ENCODE measurements at regions of chr2 and their contacts with region 1.

Region 1: DNA sequence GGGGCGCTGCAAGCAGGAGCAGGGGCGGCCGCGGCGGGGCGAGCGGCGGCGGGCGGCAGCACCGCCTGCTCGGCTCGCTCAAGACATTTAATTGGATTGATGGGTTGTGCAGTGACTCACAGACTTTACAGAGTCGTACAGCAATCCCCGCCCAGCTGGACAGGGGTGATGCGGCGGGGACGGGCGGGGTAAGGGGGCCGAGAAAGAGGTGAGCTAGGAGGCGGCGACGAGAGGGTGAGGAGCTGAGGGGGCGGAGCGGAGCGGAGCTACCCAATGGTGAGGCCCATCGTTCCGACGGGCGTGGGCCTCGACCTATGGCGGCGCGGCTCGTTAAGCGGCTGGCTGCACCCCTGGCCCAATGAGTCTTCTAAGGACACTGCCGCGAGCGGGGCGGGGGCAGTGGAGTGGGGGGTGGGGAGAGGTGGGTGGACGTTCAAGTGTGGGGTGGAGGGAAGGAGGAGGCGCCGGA is 97.1 kb upstream of the SERTAD2 start:
- DNase-seq: peak; percentile 99
- ATAC-seq: peak; percentile 93
- H3K4me3 ChIP-seq: peak overlapping the region; percentile 94 to 98
- H3K27ac ChIP-seq: peak overlapping the region; percentile 97
- H3K4me1 ChIP-seq: peaks cover 31% of the 10 kb centered on the region
- H3K27me3 ChIP-seq: no peaks in the 10 kb centered on the region
- CTCF ChIP-seq: no peak

Region 2: GRCh38 chr2:64362562-64363026 is 388.3 kb before region 1 on chr2:
- CTCF ChIA-PET with region 1: no interaction called
- POLR2A ChIA-PET with region 1: no interaction called
- in situ Hi-C with region 1: no loop called
- intact Hi-C with region 1: no loop called
- DNase-seq: no peak
- ATAC-seq: no peak
- H3K4me3 ChIP-seq: no peak overlapping the region
- H3K27ac ChIP-seq: no peak overlapping the region
- H3K4me1 ChIP-seq: no peaks in the 10 kb centered on the region
- H3K27me3 ChIP-seq: peaks cover 9% of the 10 kb centered on the region
- CTCF ChIP-seq: no peak

Region 3: GRCh38 chr2:64644177-64645004 is 106.5 kb before region 1 on chr2:
- CTCF ChIA-PET with region 1: interaction called, 4 read pairs
- POLR2A ChIA-PET with region 1: no interaction called
- in situ Hi-C with region 1: no loop called
- intact Hi-C with region 1: loop called (anchors 5 kb)
- DNase-seq: peak; percentile 53
- ATAC-seq: peak; percentile 90
- H3K4me3 ChIP-seq: peak overlapping the region; percentile 44 to 72
- H3K27ac ChIP-seq: peak overlapping the region; percentile 98
- H3K4me1 ChIP-seq: peaks cover 78% of the 10 kb centered on the region
- H3K27me3 ChIP-seq: no peaks in the 10 kb centered on the region
- CTCF ChIP-seq: no peak

Region 4: GRCh38 chr2:64678771-64679590 is 71.9 kb before region 1 on chr2:
- CTCF ChIA-PET with region 1: no interaction called
- POLR2A ChIA-PET with region 1: interaction called, 12 read pairs
- in situ Hi-C with region 1: no loop called
- intact Hi-C with region 1: no loop called
- DNase-seq: no peak
- ATAC-seq: no peak
- H3K4me3 ChIP-seq: no peak overlapping the region
- H3K27ac ChIP-seq: no peak overlapping the region
- H3K4me1 ChIP-seq: peaks cover 3% of the 10 kb centered on the region; the same call in 1 of the 2 replicates
- H3K27me3 ChIP-seq: no peaks in the 10 kb centered on the region
- CTCF ChIP-seq: no peak

Region 5: GRCh38 chr2:64865073-64865830 is 114.4 kb after region 1 on chr2:
- CTCF ChIA-PET with region 1: interaction called, 8 read pairs
- POLR2A ChIA-PET with region 1: interaction called, 5 read pairs
- in situ Hi-C with region 1: no loop called
- intact Hi-C with region 1: loop called (anchors 5 kb)
- DNase-seq: no peak
- ATAC-seq: peak; percentile 93
- H3K4me3 ChIP-seq: peak overlapping the region; percentile 51 to 74
- H3K27ac ChIP-seq: peak overlapping the region; percentile 39
- H3K4me1 ChIP-seq: peaks cover 26% of the 10 kb centered on the region
- H3K27me3 ChIP-seq: no peaks in the 10 kb centered on the region
- CTCF ChIP-seq: peak; percentile 99

Region 6: GRCh38 chr2:65710779-65711295 is 960.0 kb after region 1 on chr2:
- CTCF ChIA-PET with region 1: interaction called, 12 read pairs
- POLR2A ChIA-PET with region 1: no interaction called
- in situ Hi-C with region 1: no loop called
- intact Hi-C with region 1: no loop called
- DNase-seq: no peak
- ATAC-seq: 0 out of 2 replicates have a peak, but pooled peaks have one; percentile 75
- H3K4me3 ChIP-seq: no peak overlapping the region
- H3K27ac ChIP-seq: no peak overlapping the region
- H3K4me1 ChIP-seq: no peaks in the 10 kb centered on the region
- H3K27me3 ChIP-seq: peaks cover 3% of the 10 kb centered on the region; the same call in 1 of the 2 replicates
- CTCF ChIP-seq: peak; percentile 62

Measured in Panc1 (cell line).